IMR-90 (cell line): ENCODE measurements at regions of chr6 and their contacts with region 1.

Region 1: GRCh38 chr6:90118581-90118980 is 178.1 kb downstream of the BACH2 start:
- DNase-seq: no peak
- ATAC-seq: no peak; the same call in 1 of the 2 replicates
- H3K4me3 ChIP-seq: no peak overlapping the region
- H3K27ac ChIP-seq: no peak overlapping the region
- H3K4me1 ChIP-seq: no peaks in the 10 kb centered on the region; the same call in 1 of the 2 replicates
- H3K27me3 ChIP-seq: no peaks in the 10 kb centered on the region
- CTCF ChIP-seq: no peak
- POLR2A ChIP-seq: no peak
- RAD21 ChIP-seq: no peak

Region 2: GRCh38 chr6:90107771-90108282 is 10.8 kb before region 1 on chr6:
- CTCF ChIA-PET with region 1: no interaction called
- POLR2A ChIA-PET with region 1: no interaction called
- dilution Hi-C with region 1: no loop called
- in situ Hi-C with region 1: no loop called
- intact Hi-C with region 1: loop called (anchors 1 kb)
- DNase-seq: no peak
- ATAC-seq: peak; percentile 79
- H3K4me3 ChIP-seq: no peak overlapping the region
- H3K27ac ChIP-seq: no peak overlapping the region; the same call in 1 of the 2 replicates
- H3K4me1 ChIP-seq: peaks cover 2% of the 10 kb centered on the region; the same call in 1 of the 2 replicates
- H3K27me3 ChIP-seq: peaks cover 2% of the 10 kb centered on the region; the same call in 1 of the 2 replicates
- CTCF ChIP-seq: no peak
- POLR2A ChIP-seq: no peak
- RAD21 ChIP-seq: no peak